Gastrocnemius medialis (tissue), 4 donors: ENCODE measurements at regions of chr3 and their contacts with region 1.

Region 1: DNA sequence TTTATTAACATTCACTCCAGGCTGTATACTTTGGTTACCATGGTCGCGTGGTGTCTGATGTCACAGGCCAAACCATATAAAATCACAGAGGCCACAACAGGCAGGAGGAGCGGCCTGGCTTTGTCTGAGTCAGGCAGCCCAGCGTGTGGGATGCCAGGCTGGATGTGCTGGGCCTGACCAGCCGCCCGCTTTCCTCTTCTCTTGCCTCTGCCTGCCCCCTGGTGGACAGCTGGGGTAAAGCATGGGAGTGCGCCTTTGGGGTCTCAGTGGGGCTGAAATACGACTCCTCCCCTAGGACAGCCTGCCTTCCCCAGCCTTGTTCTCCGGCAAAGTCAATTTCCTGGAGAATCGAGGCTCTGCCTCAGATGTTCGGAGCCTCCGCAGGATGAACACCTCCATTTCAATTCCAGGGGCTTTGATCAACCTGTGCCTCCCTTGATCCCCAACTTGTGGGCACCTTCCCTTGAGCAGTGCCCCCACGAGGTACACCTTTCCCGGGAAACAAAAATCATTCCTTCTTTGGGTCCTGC is 78.2 kb downstream of the CCNL1 start:
- DNase-seq: peak; percentile 73 to 81
- ATAC-seq: peak; percentile 45 to 60
- H3K4me3 ChIP-seq: no peak overlapping the region
- H3K27ac ChIP-seq: peak overlapping the region; percentile 20 to 75 (median 56)
- H3K4me1 ChIP-seq: peaks cover 18 to 28% of the 10 kb centered on the region in 2 donors
- H3K27me3 ChIP-seq: no peaks in the 10 kb centered on the region
- CTCF ChIP-seq: peak; percentile 91 to 98 (median 96)
- POLR2A ChIP-seq: peak; percentile 36

Region 2: GRCh38 chr3:156547637-156548036 is 534.1 kb before region 1 on chr3:
- in situ Hi-C with region 1: loop called in 3 of 4 experiments (anchors 10 kb)
- intact Hi-C with region 1: loop called (anchors 5 kb)
- DNase-seq: no peak
- ATAC-seq: no peak
- H3K4me3 ChIP-seq: no peak overlapping the region
- H3K27ac ChIP-seq: peak overlapping the region in 2 of 4 donors; percentile 6 to 22
- H3K4me1 ChIP-seq: peaks cover 26 to 52% of the 10 kb centered on the region in 2 donors
- H3K27me3 ChIP-seq: no peaks in the 10 kb centered on the region
- CTCF ChIP-seq: no peak
- POLR2A ChIP-seq: no peak

Region 3: GRCh38 chr3:156826144-156826895 is 255.4 kb before region 1 on chr3 and contains the start of gene LEKR1:
- in situ Hi-C with region 1: loop called in 2 of 4 experiments (anchors 10 kb)
- intact Hi-C with region 1: no loop called
- DNase-seq: peak; percentile 68 to 69
- ATAC-seq: peak; percentile 92 to 94
- H3K4me3 ChIP-seq: peak within 1 kb of the TSS; percentile 66 to 84 (median 80)
- H3K27ac ChIP-seq: peak within 1 kb of the TSS; percentile 79 to 90 (median 82)
- H3K4me1 ChIP-seq: peaks cover 7 to 8% of the 10 kb centered on the region in 2 donors
- H3K27me3 ChIP-seq: no peaks in the 10 kb centered on the region
- CTCF ChIP-seq: no peak
- POLR2A ChIP-seq: peak; percentile 72 to 76
- total RNA-seq, gene LEKR1: 0.20 to 0.56 TPM in 2 of 4 donors, not detected in the others

Region 4: DNA sequence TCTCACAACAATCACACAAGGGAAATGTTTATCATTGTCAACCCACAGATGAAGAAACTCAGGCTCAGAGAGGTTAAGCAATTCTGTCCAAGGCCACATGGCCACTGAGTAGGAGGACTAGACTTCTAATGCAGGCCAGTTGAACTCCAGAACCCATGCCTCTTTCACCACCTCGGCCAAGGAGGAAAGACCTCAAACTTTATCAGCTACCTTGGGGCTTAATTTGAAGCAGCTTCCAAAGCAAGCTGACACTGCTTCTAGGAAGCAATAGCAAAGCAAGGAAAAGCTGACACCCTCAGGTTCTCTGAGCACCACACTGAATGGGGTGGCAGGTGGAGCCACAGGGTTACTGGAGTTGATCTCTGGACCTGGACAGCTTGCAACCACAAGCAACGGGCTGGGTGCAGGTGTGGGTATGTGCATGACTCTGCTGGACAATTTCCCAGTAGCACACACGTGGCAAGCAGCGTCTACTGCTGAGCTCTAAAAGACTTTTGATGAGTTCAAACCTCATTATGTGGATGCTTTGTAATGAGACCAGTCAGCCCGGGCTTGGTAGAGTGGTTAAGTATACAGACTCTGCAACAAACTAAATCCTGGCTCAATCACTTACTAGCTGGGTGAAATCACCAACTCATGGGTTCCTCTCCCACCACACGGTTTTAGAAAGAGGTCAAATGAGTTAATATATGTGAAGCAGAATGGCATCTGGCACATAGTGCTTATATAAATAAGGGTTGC is 55.1 kb after region 1 on chr3:
- in situ Hi-C with region 1: loop called in 3 of 4 experiments (anchors 5 to 10 kb)
- intact Hi-C with region 1: loop called (anchors 1 kb)
- DNase-seq: peak; percentile 57 to 72
- ATAC-seq: peak; percentile 49 to 50
- H3K4me3 ChIP-seq: no peak overlapping the region
- H3K27ac ChIP-seq: peak overlapping the region; percentile 76 to 86 (median 82)
- H3K4me1 ChIP-seq: peaks cover 58 to 59% of the 10 kb centered on the region in 2 donors
- H3K27me3 ChIP-seq: no peaks in the 10 kb centered on the region
- CTCF ChIP-seq: no peak
- POLR2A ChIP-seq: no peak

Region 5: DNA sequence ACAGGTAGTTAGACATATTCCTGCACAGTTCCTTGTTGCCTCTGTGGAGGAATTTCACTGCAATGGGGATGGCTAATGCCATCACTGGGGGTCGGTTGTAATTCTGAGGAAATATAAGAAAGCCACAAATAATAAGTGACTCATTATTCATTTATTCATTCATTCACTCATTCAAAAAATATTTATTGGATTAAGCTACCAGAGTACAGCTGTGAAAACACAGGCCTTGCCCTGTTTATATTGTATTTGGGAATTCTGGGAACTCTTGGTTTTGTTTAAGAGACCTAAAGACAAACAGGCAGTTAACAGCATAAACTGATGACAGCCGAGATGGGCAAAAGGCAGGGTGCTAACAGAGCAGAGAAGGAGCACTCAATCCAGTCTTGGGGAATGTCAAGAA is 378.5 kb after region 1 on chr3:
- in situ Hi-C with region 1: no loop called
- intact Hi-C with region 1: no loop called
- DNase-seq: no peak
- ATAC-seq: no peak
- H3K4me3 ChIP-seq: no peak overlapping the region
- H3K27ac ChIP-seq: no peak overlapping the region
- H3K4me1 ChIP-seq: no peaks in the 10 kb centered on the region
- H3K27me3 ChIP-seq: no peaks in the 10 kb centered on the region
- CTCF ChIP-seq: no peak
- POLR2A ChIP-seq: no peak